Ascending aorta (tissue), 2 donors: ENCODE measurements at regions of chr3 and their contacts with region 1.

Region 1: DNA sequence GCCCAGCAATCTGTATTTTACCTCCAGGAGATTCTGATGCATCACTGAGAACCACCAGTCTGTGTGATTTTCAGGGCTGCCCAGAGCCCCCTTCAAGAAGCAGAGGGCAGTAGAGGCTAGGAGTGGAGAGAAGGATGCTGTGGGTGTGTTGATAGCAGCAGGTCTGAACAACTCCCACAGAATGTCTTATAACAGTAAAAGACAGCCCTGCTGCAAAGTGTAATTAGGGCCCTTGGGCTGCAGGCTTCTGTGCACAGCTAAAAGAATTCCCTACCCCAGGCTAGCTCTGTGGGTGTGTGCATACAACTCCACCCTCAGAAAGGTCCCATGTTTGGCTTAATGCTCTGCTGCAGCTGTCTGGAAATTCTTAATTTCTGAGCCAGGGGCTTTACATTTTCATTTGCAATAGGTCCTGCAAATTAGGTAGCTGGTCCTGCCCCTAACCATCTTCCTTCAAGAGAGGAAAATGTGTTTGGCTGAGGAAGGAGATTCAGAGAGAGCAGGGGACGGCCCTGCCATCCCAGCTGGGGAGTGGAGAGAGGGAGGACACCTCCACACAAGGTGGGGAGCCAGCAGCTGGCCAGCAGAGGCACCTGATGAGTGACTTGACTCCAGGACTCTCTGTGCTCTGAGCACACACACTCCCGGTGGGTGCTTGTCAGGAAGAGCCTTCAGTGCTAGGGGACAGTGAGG is 43.2 kb upstream of the RAB6B start:
- DNase-seq: peak in 1 of 2 donors; percentile 46
- H3K4me3 ChIP-seq: no peak overlapping the region
- H3K27ac ChIP-seq: no peak overlapping the region
- H3K4me1 ChIP-seq: peaks cover 3 to 24% of the 10 kb centered on the region in 2 donors
- H3K27me3 ChIP-seq: no peaks in the 10 kb centered on the region
- CTCF ChIP-seq: no peak

Region 2: DNA sequence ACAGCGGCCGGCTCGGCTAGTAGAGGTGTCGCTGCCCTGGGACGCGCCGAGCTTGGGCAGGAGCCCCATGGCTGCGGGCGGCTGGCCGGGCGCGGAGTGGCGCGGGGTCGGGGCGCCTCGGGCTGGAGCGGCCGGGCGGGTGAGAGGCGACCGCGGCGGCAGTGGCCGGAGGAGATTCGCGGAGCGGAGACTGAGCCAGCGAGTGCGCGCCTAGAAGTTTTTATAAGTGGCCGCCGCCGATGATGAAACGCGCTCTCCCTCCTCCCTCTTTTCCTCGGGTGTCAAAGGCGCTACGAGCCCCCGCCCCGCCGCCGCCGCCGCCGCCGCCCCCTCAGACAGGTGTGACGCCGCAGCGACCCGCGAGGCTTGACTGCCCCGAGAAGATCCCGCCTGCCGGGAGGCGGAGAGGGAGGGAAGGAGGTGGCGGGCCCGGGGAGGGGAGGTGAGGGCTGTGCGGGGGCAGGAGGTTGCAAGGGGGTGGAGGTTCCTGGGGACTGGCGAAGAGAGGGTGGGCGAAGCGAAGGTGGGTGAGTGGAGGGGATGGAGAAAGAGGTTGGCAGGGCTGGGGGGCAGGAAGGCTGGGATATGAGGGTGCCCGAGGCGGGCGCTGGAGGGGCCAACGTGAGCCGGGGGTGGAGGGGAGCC is 90.9 kb after region 1 on chr3 and contains the start of gene SLCO2A1:
- intact Hi-C with region 1: loop called (anchors 5 kb)
- DNase-seq: no peak
- H3K4me3 ChIP-seq: peak within 1 kb of the TSS; percentile 59 to 80
- H3K27ac ChIP-seq: no peak within 1 kb of the TSS
- H3K4me1 ChIP-seq: peaks cover 2 to 4% of the 10 kb centered on the region in 2 donors
- H3K27me3 ChIP-seq: no peaks in the 10 kb centered on the region
- CTCF ChIP-seq: no peak
- total RNA-seq, gene SLCO2A1: 111 TPM